ENCODE measurements at regions of chr17 and their contacts with region 1.

Region 1: DNA sequence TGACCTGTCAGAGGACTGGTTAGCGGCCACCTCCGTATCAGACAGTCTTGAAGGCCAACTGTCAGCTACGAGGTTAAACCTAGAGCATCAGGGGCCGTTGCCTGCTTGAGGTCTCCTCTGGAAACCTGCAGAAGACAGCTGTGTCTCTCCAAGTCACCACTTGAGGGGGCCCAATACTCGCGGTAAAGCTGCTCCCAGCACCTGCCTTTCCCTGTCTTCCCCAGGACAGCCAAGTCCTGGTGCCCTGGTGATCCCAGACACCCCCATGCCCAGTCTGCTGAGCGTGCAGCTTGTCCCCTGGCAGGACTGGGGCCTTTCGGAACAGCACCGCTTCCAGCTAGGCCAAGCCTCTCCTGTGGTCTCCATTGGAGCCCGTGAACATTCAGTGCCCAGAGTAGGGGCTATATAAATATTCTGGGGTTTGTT is 80.1 kb downstream of the DNAH17 start:
- DNase-seq: peak; percentile 94 to 97
- ATAC-seq: peak; percentile 87 to 95
- H3K4me3 ChIP-seq: no peak overlapping the region
- H3K27ac ChIP-seq: peak overlapping the region; percentile 86 to 91
- H3K4me1 ChIP-seq: peaks cover 32% of the 10 kb centered on the region
- CTCF ChIP-seq: peak; percentile 99
- EP300 ChIP-seq: peak in 1 of 2 experiments; percentile 17; a peak in 1 of 5 replicates
- POLR2A ChIP-seq: no peak
- RAD21 ChIP-seq: peak; percentile 100

Region 2: GRCh38 chr17:78438271-78438691 is 58.8 kb before region 1 on chr17:
- CTCF ChIA-PET with region 1: no interaction called
- POLR2A ChIA-PET with region 1: no interaction called
- DNase-seq: no peak
- ATAC-seq: peak in 1 of 2 experiments; percentile 4; a peak in 2 of 6 replicates
- H3K4me3 ChIP-seq: no peak overlapping the region
- H3K27ac ChIP-seq: no peak overlapping the region
- H3K4me1 ChIP-seq: 0 out of 3 replicates have a peak, but pooled peaks cover 3% of the 10 kb centered on the region
- CTCF ChIP-seq: no peak
- EP300 ChIP-seq: no peak
- POLR2A ChIP-seq: no peak
- RAD21 ChIP-seq: no peak

Region 3: GRCh38 chr17:78484300-78485246 is 12.6 kb before region 1 on chr17:
- CTCF ChIA-PET with region 1: interaction called, 44 read pairs
- POLR2A ChIA-PET with region 1: interaction called, 6 read pairs
- DNase-seq: peak; percentile 58 to 93
- ATAC-seq: peak; percentile 89 to 97
- H3K4me3 ChIP-seq: peak overlapping the region; percentile 86
- H3K27ac ChIP-seq: peak overlapping the region; percentile 86 to 90
- H3K4me1 ChIP-seq: peaks cover 15% of the 10 kb centered on the region
- CTCF ChIP-seq: no peak
- EP300 ChIP-seq: no peak
- POLR2A ChIP-seq: peak; percentile 84
- RAD21 ChIP-seq: no peak

Region 4: GRCh38 chr17:78585006-78585630 is 88.0 kb after region 1 on chr17:
- CTCF ChIA-PET with region 1: interaction called, 17 read pairs
- POLR2A ChIA-PET with region 1: no interaction called
- DNase-seq: no peak
- ATAC-seq: no peak
- H3K4me3 ChIP-seq: no peak overlapping the region
- H3K27ac ChIP-seq: peak overlapping the region; percentile 34 to 94; a peak in 4 of 6 replicates
- H3K4me1 ChIP-seq: peaks cover 23% of the 10 kb centered on the region
- CTCF ChIP-seq: no peak
- EP300 ChIP-seq: no peak
- POLR2A ChIP-seq: no peak
- RAD21 ChIP-seq: no peak

Region 5: DNA sequence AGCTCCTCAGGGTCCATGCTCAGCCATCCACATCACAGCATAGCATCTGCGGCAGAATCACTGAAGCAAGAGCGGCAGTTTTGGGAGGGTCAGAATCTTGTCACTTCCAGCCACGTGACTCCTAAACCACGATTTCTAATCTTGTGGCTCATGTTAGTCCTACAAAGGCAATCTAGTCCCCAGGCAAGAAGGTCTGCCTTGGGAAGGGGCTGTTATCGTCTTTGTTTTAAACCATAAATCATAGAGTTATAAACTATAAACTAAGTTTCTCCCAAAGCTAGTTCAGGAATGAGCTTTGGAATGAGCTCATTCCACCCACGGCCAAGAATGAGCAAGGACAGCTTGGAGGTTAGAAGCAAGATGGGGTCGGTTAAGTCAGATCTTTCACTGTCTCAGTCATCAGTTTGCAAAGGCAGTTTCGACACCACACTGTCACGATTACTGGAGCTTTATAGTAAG is 100.9 kb after region 1 on chr17:
- CTCF ChIA-PET with region 1: interaction called, 126 read pairs
- POLR2A ChIA-PET with region 1: interaction called, 7 read pairs
- DNase-seq: no peak
- ATAC-seq: no peak
- H3K4me3 ChIP-seq: no peak overlapping the region
- H3K27ac ChIP-seq: peak overlapping the region; percentile 94 to 99
- H3K4me1 ChIP-seq: peaks cover 74% of the 10 kb centered on the region
- CTCF ChIP-seq: no peak
- EP300 ChIP-seq: no peak
- POLR2A ChIP-seq: no peak
- RAD21 ChIP-seq: no peak

Region 6: DNA sequence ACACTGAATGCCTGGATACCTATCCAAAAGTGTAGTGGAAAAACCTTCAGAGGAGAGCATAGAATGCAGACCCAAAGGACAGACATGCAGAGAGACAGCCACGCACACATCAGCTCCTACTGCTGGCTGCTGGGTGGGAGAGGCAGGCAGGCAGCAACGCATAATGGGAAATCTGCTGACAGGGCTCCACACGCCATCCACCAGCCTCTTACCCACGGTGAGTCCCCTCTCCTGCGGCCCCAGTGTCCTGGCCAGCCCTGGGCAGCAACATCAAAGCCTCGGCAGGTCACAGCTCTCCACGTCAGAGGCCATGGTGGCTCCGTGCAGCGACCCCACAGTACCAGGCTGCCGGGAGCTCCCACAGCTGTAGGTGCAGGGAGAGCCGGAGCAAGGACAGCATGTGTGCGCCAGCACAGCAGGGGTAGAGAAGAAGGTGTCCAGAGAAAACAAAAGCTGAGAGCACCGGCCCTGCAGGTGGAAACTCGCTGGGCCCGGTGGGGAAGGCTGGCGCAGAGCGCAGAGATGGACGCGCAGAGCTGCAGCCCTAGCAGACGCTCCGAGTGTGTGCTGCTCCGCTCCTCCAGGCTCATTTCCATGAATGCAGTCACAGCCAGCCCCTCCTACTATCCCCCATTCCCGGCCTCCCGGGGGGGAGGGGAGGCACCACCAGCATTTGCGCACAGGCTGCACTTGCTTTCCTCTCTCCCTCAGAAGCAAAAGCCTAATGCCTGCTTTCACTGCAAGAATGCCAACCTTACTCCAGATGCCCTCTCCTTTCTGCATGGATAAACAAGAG is 226.1 kb after region 1 on chr17:
- CTCF ChIA-PET with region 1: interaction called, 488 read pairs
- POLR2A ChIA-PET with region 1: no interaction called
- DNase-seq: no peak
- ATAC-seq: peak; percentile 10 to 12; a peak in 3 of 6 replicates
- H3K4me3 ChIP-seq: no peak overlapping the region
- H3K27ac ChIP-seq: peak overlapping the region in 1 of 2 experiments; percentile 61; a peak in 2 of 6 replicates
- H3K4me1 ChIP-seq: peaks cover 39% of the 10 kb centered on the region
- CTCF ChIP-seq: no peak
- EP300 ChIP-seq: no peak
- POLR2A ChIP-seq: no peak
- RAD21 ChIP-seq: no peak

Region 7: GRCh38 chr17:78745407-78746088 is 248.4 kb after region 1 on chr17:
- CTCF ChIA-PET with region 1: interaction called, 60 read pairs
- POLR2A ChIA-PET with region 1: no interaction called
- DNase-seq: peak in 1 of 2 experiments; percentile 55
- ATAC-seq: peak; percentile 41 to 57; a peak in 3 of 6 replicates
- H3K4me3 ChIP-seq: no peak overlapping the region
- H3K27ac ChIP-seq: peak overlapping the region in 1 of 2 experiments; percentile 50; a peak in 2 of 6 replicates
- H3K4me1 ChIP-seq: peaks cover 23% of the 10 kb centered on the region; the same call in 2 of the 3 replicates
- CTCF ChIP-seq: peak; percentile 92
- EP300 ChIP-seq: no peak
- POLR2A ChIP-seq: no peak
- RAD21 ChIP-seq: peak; percentile 63 to 72